ENCODE measurements at regions of chr20 and their contacts with region 1.

Region 1: DNA sequence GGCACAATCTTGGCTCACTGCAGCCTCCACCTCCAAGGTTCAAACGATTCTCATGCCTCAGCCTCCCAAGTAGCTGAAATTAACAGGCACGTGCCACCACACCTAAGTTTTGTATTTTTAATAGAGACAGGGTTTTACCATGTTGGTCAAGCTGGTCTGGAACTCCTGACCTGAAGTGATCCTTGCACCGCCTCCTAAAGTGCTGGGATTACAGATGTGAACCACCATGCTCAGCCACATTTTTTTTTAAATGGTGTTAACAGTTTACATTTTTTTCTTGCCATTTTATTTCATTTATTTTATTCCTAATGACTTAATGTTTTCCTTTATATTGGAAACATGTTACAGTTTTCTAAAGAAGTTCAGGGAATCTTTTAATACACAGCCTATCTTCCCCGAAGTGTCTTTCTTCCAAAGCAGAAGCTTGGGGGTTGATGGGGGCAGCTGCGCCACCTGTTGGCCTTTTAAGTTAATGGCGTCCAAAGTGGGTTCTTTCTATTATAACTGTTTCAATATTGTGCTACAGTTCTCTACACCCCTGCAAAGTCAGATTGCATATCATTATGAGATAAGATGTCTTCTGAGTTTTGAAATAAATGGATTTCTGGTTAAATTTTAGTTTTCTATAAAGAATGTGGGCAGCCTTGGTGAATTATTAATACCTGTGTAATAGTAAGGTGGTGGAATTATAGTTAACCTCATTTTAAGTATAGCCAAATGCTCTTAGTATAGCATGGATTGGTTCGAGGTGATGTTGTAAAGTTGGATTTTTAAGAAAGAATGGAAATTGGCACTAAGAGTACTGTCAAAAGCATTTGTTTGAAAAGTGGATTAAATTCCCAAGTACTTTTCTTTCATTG is 42.0 kb upstream of the PLCG1 start:
- DNase-seq: peak; percentile 45 to 84
- ATAC-seq: peak; percentile 76 to 84 (median 77)
- H3K4me3 ChIP-seq: no peak overlapping the region
- H3K4me3 Mint-ChIP-seq: peak overlapping the region; percentile 35
- H3K27ac ChIP-seq: no peak overlapping the region
- H3K27ac Mint-ChIP-seq: peak overlapping the region in 1 of 2 donors; percentile 34
- H3K4me1 ChIP-seq: no peaks in the 10 kb centered on the region
- H3K4me1 Mint-ChIP-seq: peaks cover 0 to 5% of the 10 kb centered on the region in 2 donors
- H3K27me3 ChIP-seq: no peaks in the 10 kb centered on the region
- H3K27me3 Mint-ChIP-seq: no peaks in the 10 kb centered on the region
- CTCF ChIP-seq: peak; percentile 96

Region 2: DNA sequence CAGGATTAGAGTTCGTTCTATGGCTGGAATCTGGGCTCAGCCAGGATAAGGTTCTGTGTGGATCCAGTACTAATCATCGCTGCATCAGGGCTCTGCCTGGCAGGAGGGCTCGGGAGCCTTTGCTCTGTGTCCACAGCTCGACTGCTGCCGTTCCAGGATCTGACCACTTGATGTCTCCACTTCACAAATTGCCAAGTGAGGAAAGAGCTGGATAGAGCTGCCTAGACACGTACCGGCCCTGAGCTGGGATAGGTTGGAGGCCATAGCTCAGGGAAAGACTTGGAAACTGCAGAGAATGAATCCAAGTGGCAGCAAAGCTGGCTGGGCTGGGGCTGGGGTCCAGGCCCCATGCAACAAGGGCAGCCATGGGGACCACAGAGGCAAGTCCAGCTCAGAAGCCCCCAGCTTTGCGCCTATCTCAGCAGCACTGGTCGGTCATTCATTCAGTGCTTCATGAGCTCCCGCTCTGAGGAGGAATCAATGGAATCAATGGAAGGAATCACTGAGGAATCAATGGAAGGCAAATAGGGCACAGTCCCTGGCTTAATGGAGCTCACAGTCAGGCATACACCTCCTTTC is 104.7 kb before region 1 on chr20:
- intact Hi-C with region 1: loop called (anchors 1 kb)
- DNase-seq: peak; percentile 36 to 79
- ATAC-seq: peak; percentile 77 to 93 (median 88)
- H3K4me3 ChIP-seq: no peak overlapping the region
- H3K4me3 Mint-ChIP-seq: peak overlapping the region; percentile 25
- H3K27ac ChIP-seq: peak overlapping the region; percentile 1
- H3K27ac Mint-ChIP-seq: peak overlapping the region in 1 of 2 donors; percentile 4
- H3K4me1 ChIP-seq: peaks cover 33% of the 10 kb centered on the region
- H3K4me1 Mint-ChIP-seq: peaks cover 32 to 36% of the 10 kb centered on the region in 2 donors
- H3K27me3 ChIP-seq: no peaks in the 10 kb centered on the region
- H3K27me3 Mint-ChIP-seq: no peaks in the 10 kb centered on the region
- CTCF ChIP-seq: peak; percentile 63

Region 3: DNA sequence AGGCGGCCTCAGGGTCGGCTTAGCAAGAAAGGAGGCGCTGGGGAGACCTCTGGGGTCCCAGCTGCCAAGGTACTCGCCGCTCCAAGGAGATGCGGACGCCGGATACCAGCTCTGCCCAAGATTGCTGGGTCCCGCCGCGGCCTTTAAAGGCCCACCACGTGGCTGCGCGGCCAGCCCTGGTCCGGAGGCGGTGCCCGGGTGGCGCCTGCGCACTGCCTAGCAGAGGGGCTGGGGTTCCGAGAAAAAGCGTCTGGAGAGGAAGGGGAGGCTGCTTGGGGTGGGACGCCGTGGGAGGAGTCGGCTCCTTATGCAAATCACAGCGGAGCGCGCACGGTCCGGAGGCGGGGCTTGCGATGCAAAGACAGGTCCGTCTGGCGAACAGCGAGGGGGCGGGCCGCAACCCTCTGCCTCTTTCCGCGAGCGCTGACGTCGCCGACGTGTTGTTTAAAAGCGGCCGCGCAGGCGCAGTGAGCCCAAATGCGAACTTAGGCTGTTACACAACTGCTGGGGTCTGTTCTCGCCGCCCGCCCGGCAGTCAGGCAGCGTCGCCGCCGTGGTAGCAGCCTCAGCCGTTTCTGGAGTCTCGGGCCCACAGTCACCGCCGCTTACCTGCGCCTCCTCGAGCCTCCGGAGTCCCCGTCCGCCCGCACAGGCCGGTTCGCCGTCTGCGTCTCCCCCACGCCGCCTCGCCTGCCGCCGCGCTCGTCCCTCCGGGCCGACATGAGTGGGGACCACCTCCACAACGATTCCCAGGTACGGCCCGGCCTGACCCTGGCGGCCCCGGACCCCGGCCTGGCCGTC is 66.8 kb before region 1 on chr20 and contains the start of gene TOP1:
- intact Hi-C with region 1: loop called (anchors 2 kb)
- DNase-seq: peak; percentile 100
- ATAC-seq: peak; percentile 95 to 99 (median 96)
- H3K4me3 ChIP-seq: peak within 1 kb of the TSS; percentile 65
- H3K4me3 Mint-ChIP-seq: peak within 1 kb of the TSS; percentile 98
- H3K27ac ChIP-seq: peak within 1 kb of the TSS; percentile 81
- H3K27ac Mint-ChIP-seq: peak within 1 kb of the TSS; percentile 94 to 98
- H3K4me1 ChIP-seq: peaks cover 15% of the 10 kb centered on the region
- H3K4me1 Mint-ChIP-seq: peaks cover 41 to 47% of the 10 kb centered on the region in 2 donors
- H3K27me3 ChIP-seq: no peaks in the 10 kb centered on the region
- H3K27me3 Mint-ChIP-seq: no peaks in the 10 kb centered on the region
- CTCF ChIP-seq: no peak
- total RNA-seq, gene TOP1: 32.2 to 36.3 (median 36.3) TPM

Region 4: GRCh38 chr20:41136680-41137613 is 41.6 kb after region 1 on chr20 and contains the start of gene PLCG1:
- intact Hi-C with region 1: no loop called
- DNase-seq: peak; percentile 78 to 90
- ATAC-seq: peak; percentile 69 to 83 (median 75)
- H3K4me3 ChIP-seq: peak within 1 kb of the TSS; percentile 54
- H3K4me3 Mint-ChIP-seq: peak within 1 kb of the TSS; percentile 92
- H3K27ac ChIP-seq: peak within 1 kb of the TSS; percentile 68
- H3K27ac Mint-ChIP-seq: peak within 1 kb of the TSS; percentile 93 to 94
- H3K4me1 ChIP-seq: peaks cover 60% of the 10 kb centered on the region
- H3K4me1 Mint-ChIP-seq: peaks cover 56 to 60% of the 10 kb centered on the region in 2 donors
- H3K27me3 ChIP-seq: no peaks in the 10 kb centered on the region
- H3K27me3 Mint-ChIP-seq: no peaks in the 10 kb centered on the region
- CTCF ChIP-seq: no peak
- total RNA-seq, gene PLCG1: 199 to 242 (median 236) TPM

Region 5: DNA sequence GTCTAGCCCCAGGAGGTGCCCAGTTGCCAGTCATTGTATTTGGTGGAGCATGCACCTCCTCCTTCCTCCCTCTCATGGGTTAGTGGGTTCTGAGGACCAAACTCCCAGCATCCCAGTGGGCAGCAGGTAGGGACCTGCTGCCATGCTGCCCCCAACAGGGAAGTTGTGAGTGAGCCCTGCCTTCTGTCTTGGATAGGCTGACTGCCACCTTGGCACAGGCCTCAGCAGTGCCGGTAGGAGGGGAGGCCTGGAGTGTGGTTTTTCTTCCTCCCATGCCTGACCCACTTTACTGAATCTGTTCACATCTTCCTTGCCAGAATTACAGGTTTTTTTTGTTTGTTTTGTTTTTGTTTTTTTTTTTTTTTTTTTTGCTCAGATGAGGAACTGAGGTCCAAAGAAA is 66.5 kb after region 1 on chr20:
- intact Hi-C with region 1: no loop called
- DNase-seq: peak in 1 of 2 donors; percentile 49
- ATAC-seq: no peak
- H3K4me3 ChIP-seq: no peak overlapping the region
- H3K4me3 Mint-ChIP-seq: no peak overlapping the region
- H3K27ac ChIP-seq: no peak overlapping the region
- H3K27ac Mint-ChIP-seq: peak overlapping the region; percentile 34 to 53
- H3K4me1 ChIP-seq: peaks cover 62% of the 10 kb centered on the region
- H3K4me1 Mint-ChIP-seq: peaks cover 55 to 59% of the 10 kb centered on the region in 2 donors
- H3K27me3 ChIP-seq: no peaks in the 10 kb centered on the region
- H3K27me3 Mint-ChIP-seq: peaks cover 0 to 5% of the 10 kb centered on the region in 2 donors
- CTCF ChIP-seq: no peak